Naive thymus-derived CD4-positive, alpha-beta T cell (primary cell): ENCODE measurements at regions of chr11 and their contacts with region 1.

Region 1: GRCh38 chr11:124673333-124674167 is at the starts of genes SIAE and SPA17:
- DNase-seq: peak; percentile 63 to 92 (median 87)
- ATAC-seq: peak; percentile 91
- H3K4me3 ChIP-seq: peak within 1 kb of the TSS; percentile 76
- H3K4me3 Mint-ChIP-seq: peak within 1 kb of the TSS in 9 of 10 donors; percentile 82 to 94 (median 91)
- H3K27ac ChIP-seq: peak within 1 kb of the TSS; percentile 91
- H3K27ac Mint-ChIP-seq: peak within 1 kb of the TSS in 7 of 9 donors; percentile 94 to 100 (median 98)
- H3K4me1 ChIP-seq: peaks cover 14 to 40% of the 10 kb centered on the region in 2 donors
- H3K4me1 Mint-ChIP-seq: peaks cover 22 to 39% (median 31%) of the 10 kb centered on the region in 7 donors
- H3K27me3 ChIP-seq: no peaks in the 10 kb centered on the region
- H3K27me3 Mint-ChIP-seq: peaks cover 0 to 4% (median 0%) of the 10 kb centered on the region in 5 donors
- total RNA-seq, gene SIAE: 6.2 to 11.3 (median 10.4) TPM
- total RNA-seq, gene SPA17: 1.00 to 1.1 (median 1.0) TPM

Region 2: DNA sequence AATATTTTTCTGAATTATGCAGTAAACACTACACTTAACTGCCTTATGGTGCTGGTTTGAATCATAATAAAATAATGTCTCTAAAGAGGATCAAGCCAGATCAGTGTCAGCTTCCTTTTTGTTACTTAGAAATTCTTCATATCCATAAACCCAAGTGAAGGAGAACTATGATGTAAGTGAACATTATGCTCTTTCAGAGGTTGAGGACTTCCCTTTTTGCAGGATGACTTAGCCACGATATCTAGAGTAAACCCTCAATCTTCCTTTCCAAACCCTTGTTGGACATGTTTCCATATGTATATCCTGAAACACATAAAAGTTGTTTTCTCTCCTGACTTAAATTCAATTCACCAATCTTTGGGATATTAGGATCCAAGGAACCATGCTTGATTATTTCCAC is 378.9 kb before region 1 on chr11:
- CTCF ChIA-PET with region 1: no interaction called
- POLR2A ChIA-PET with region 1: no interaction called
- intact Hi-C with region 1: no loop called
- DNase-seq: no peak
- ATAC-seq: no peak
- H3K4me3 ChIP-seq: no peak overlapping the region
- H3K4me3 Mint-ChIP-seq: no peak overlapping the region
- H3K27ac ChIP-seq: no peak overlapping the region
- H3K27ac Mint-ChIP-seq: no peak overlapping the region
- H3K4me1 ChIP-seq: no peaks in the 10 kb centered on the region
- H3K4me1 Mint-ChIP-seq: no peaks in the 10 kb centered on the region
- H3K27me3 ChIP-seq: no peaks in the 10 kb centered on the region
- H3K27me3 Mint-ChIP-seq: peaks cover 0 to 31% (median 6%) of the 10 kb centered on the region in 5 donors

Region 3: DNA sequence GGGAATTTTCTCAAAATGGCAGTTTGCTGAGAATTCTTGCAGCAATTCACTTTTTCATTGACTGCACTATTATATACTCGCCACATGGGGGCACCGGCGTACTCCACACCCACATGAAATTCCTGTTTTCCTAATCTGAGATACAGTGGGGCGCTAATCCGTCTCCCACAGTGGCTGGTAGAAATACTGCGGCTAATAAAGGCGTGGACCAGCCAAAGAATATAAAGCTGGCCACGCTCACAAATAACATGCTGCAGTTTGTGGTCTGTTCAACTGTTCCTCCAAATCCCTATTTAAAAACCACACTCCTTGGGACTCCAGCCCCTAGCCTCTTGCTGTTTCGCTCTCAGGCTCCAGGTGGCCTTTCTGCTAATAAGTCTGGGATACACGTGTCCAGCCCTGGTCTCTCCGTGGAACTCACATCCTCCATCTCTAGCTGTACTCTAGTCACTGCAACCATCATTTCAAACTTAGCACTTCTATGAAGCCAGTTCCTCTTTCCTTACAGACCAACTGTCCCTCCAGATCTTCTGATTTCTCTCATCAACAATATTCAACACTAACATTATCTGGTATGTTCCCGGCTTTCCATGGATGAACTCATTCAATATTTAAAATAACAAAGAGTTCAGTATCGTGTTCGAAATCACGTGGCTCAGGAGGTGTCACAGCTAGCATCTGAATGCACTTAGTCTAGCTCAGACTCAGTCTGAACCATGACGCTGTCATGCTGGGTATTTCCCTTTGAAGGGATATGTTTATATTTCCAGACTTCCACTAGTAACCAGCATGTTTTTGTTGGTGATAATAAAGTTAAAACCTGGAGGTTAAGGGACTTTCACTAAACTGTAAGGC is 28.9 kb before region 1 on chr11:
- CTCF ChIA-PET with region 1: interaction called, 5 read pairs
- POLR2A ChIA-PET with region 1: interaction called, 3 read pairs
- intact Hi-C with region 1: loop called in 1 of 2 experiments (anchors 1 kb)
- DNase-seq: peak in 7 of 9 donors; percentile 6 to 28 (median 21)
- ATAC-seq: peak; percentile 88
- H3K4me3 ChIP-seq: no peak overlapping the region
- H3K4me3 Mint-ChIP-seq: no peak overlapping the region
- H3K27ac ChIP-seq: no peak overlapping the region
- H3K27ac Mint-ChIP-seq: no peak overlapping the region
- H3K4me1 ChIP-seq: no peaks in the 10 kb centered on the region
- H3K4me1 Mint-ChIP-seq: peaks cover 3 to 11% (median 5%) of the 10 kb centered on the region in 7 donors
- H3K27me3 ChIP-seq: no peaks in the 10 kb centered on the region
- H3K27me3 Mint-ChIP-seq: no peaks in the 10 kb centered on the region

Region 4: DNA sequence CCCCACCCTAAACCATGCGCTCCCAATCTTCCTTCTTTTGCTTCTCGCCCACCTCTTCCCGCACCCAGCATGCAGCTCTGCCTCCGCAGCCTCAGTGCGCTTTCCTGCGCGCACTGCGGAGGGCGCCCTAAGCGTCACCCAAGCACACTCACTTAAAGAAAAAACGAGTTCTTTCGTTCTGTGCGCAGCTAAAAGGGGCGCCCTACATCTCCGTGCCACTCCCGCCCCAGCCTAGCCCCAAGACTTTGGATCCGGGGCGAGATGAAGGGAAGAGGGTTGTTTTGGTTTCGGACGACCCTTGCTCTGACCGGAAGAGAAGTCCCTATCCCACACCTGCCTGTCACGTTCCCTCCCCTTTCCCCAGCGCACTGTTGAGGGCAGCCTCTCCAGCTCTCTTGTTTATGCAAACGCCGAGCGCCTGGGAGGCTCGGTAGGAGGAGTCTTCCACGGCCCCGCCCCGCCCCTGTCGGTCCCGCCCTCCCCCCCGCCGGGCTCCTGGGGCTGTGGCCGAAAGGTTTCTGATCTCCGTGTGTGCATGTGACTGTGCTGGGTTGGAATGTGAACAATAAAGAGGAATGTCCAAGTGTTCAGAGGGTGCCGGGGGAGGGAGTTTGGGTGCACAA is 73.2 kb after region 1 on chr11:
- CTCF ChIA-PET with region 1: interaction called, 34 read pairs
- POLR2A ChIA-PET with region 1: interaction called, 112 read pairs
- intact Hi-C with region 1: loop called (anchors 1 kb)
- DNase-seq: peak; percentile 66 to 88 (median 85)
- ATAC-seq: peak; percentile 93
- H3K4me3 ChIP-seq: peak overlapping the region; percentile 99
- H3K4me3 Mint-ChIP-seq: peak overlapping the region; percentile 91 to 100 (median 98)
- H3K27ac ChIP-seq: peak overlapping the region; percentile 72
- H3K27ac Mint-ChIP-seq: peak overlapping the region; percentile 91 to 98 (median 96)
- H3K4me1 ChIP-seq: peaks cover 0 to 3% of the 10 kb centered on the region in 2 donors
- H3K4me1 Mint-ChIP-seq: peaks cover 4 to 37% (median 19%) of the 10 kb centered on the region in 7 donors
- H3K27me3 ChIP-seq: no peaks in the 10 kb centered on the region
- H3K27me3 Mint-ChIP-seq: peaks cover 0 to 22% (median 0%) of the 10 kb centered on the region in 5 donors

Region 5: GRCh38 chr11:124793466-124794278 is 120.1 kb after region 1 on chr11:
- CTCF ChIA-PET with region 1: interaction called, 51 read pairs
- POLR2A ChIA-PET with region 1: interaction called, 29 read pairs
- intact Hi-C with region 1: loop called (anchors 1 kb)
- DNase-seq: peak in 6 of 9 donors; percentile 5 to 50 (median 40)
- ATAC-seq: peak; percentile 84
- H3K4me3 ChIP-seq: no peak overlapping the region
- H3K4me3 Mint-ChIP-seq: no peak overlapping the region
- H3K27ac ChIP-seq: no peak overlapping the region
- H3K27ac Mint-ChIP-seq: peak overlapping the region in 1 of 9 donors; percentile 2
- H3K4me1 ChIP-seq: peaks cover 2 to 3% of the 10 kb centered on the region in 2 donors
- H3K4me1 Mint-ChIP-seq: peaks cover 17 to 45% (median 41%) of the 10 kb centered on the region in 7 donors
- H3K27me3 ChIP-seq: no peaks in the 10 kb centered on the region
- H3K27me3 Mint-ChIP-seq: no peaks in the 10 kb centered on the region

Region 6: DNA sequence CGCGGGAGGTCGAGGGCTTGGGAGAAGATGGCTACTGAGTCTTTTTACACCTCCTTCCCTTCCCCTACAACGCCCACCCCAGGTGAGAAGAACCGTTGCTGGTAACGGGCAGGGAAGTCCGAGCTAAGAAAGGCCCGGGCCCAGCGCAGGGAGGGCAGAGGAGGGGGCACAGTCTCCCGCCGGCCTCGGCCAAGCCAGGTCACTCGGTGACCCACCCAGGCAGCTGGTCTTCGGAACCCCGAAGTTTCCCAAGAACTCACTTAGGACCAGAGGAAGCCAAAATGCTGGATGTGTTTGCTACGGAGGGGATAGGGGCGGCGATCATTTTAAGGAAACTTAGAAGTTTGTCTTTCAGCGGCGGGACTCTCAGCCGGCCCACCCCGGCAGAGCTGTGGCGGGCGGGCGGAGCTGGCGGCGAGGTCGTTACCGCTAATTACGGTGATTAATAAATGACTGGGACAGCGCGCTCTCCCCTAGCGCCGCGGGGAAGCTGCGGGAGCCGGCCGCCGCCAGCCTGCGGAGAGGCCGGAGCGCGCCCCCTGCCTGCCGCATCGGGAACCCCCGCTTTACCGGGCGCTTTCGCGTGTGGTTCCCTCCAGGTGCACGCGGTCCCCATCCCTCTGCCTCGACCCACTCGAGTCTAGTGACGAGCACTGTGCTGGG is 192.5 kb after region 1 on chr11:
- CTCF ChIA-PET with region 1: interaction called, 3 read pairs
- POLR2A ChIA-PET with region 1: no interaction called
- intact Hi-C with region 1: loop called in 1 of 2 experiments (anchors 2 kb)
- DNase-seq: peak in 8 of 9 donors; percentile 27 to 61 (median 46)
- ATAC-seq: peak; percentile 72
- H3K4me3 ChIP-seq: no peak overlapping the region
- H3K4me3 Mint-ChIP-seq: peak overlapping the region in 7 of 10 donors; percentile 37 to 68 (median 51)
- H3K27ac ChIP-seq: no peak overlapping the region
- H3K27ac Mint-ChIP-seq: peak overlapping the region in 1 of 9 donors; percentile 54
- H3K4me1 ChIP-seq: peaks cover 5 to 29% of the 10 kb centered on the region in 2 donors
- H3K4me1 Mint-ChIP-seq: peaks cover 7 to 67% (median 43%) of the 10 kb centered on the region in 7 donors
- H3K27me3 ChIP-seq: peaks cover 20 to 70% of the 10 kb centered on the region in 2 donors
- H3K27me3 Mint-ChIP-seq: peaks cover 80 to 97% (median 91%) of the 10 kb centered on the region in 5 donors

Region 7: DNA sequence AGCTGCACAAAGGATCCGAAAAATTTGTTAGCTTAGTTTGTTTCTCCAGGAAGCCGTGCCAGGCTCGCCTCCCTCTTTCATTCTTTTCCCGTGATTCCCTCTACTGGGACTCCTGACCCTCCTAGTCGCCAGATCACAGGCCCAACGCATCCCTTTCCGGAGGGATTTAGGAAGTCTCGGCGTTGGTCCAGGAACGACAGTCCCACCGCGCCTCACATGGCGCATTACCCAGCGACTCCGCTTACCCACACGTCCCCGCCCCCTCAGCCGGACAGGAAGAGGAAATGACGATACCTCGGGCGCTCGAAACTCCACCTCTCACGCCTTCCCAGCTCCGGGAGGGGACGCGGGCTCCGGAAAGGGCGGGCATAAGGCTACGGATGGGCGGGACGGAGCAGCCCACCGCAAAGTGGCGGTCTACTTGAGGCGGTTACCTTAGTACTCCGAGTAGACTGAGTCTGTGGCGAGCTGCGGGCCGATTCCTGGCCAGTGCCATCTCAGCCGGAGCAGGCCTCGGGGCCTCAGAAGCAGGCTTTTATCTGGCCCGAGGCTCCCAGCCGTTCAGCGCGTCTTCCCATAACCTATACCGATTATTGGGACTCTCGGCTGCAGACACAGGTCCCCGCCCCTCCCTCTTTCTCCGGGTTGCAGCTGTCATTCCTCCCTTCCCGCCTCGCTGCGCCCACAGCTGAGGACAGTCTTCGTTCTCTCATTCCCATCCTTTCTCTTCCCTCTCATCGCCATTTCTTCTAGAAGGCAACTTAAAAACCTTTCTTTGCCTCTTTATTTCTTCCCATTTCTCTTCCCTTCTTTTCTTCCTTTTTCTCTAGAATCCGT is 280.4 kb after region 1 on chr11 and contains the start of gene CCDC15:
- CTCF ChIA-PET with region 1: interaction called, 3 read pairs
- POLR2A ChIA-PET with region 1: interaction called, 6 read pairs
- intact Hi-C with region 1: loop called (anchors 2 kb)
- DNase-seq: peak; percentile 78 to 94 (median 92)
- ATAC-seq: peak; percentile 99
- H3K4me3 ChIP-seq: peak within 1 kb of the TSS; percentile 72
- H3K4me3 Mint-ChIP-seq: no peak within 1 kb of the TSS
- H3K27ac ChIP-seq: peak within 1 kb of the TSS; percentile 85
- H3K27ac Mint-ChIP-seq: no peak within 1 kb of the TSS
- H3K4me1 ChIP-seq: peaks cover 27 to 42% of the 10 kb centered on the region in 2 donors
- H3K4me1 Mint-ChIP-seq: peaks cover 0 to 7% (median 0%) of the 10 kb centered on the region in 7 donors
- H3K27me3 ChIP-seq: no peaks in the 10 kb centered on the region
- H3K27me3 Mint-ChIP-seq: no peaks in the 10 kb centered on the region
- total RNA-seq, gene CCDC15: 1.6 to 4.7 (median 2.7) TPM

Region 8: DNA sequence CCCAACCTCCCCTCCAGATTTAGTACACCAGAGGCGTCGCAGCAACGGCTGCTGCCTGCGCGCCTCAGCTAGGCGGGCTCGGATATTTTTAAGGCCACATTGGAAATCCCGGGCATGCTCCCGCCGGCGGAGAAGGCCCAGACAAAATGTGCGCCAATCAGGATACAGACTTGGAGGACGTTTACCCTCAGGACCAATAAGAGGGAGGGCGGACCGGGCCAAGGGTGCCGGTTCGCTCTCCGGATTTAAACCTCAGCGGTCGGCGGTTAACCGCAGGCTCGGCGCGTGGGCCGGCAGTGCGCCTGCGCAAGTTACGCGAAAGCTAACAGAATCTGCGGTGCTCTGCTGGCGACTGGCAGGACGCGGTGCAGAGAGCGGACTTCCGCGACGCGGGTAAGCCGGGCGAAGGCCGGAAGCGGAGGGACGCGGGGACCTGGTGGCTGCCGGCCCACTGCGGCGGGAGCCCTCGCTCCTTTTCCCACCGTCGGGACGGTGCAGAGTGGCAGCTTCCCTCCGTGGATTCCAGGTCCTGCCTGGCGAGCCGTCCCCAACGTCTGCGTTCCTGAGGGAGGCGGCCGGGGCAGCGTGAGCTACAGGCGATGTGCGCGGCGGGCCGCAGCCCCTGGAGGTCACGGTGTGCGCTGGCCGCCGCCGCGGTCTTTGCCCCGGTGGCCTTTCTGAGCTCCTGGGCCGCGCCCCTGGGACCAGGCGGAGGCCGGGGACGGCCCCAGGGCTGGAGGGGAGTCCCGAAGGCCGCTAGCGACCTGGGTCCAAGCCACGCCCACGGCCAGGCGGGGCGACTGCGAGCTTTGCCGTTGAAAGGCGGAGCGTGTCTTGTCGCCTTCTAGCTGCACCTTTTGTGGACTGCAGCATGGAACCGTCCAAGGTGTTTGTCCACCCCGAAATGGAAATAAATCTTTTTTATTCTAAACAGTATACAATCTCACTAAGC is 1214.1 kb after region 1 on chr11 and contains the start of gene HYLS1:
- CTCF ChIA-PET with region 1: no interaction called
- POLR2A ChIA-PET with region 1: no interaction called
- intact Hi-C with region 1: loop called (anchors 5 kb)
- DNase-seq: peak; percentile 90 to 100 (median 94)
- ATAC-seq: peak; percentile 95
- H3K4me3 ChIP-seq: peak within 1 kb of the TSS; percentile 86
- H3K4me3 Mint-ChIP-seq: peak within 1 kb of the TSS; percentile 87 to 98 (median 96)
- H3K27ac ChIP-seq: peak within 1 kb of the TSS; percentile 71
- H3K27ac Mint-ChIP-seq: peak within 1 kb of the TSS; percentile 88 to 99 (median 97)
- H3K4me1 ChIP-seq: peaks cover 6% of the 10 kb centered on the region in 2 donors
- H3K4me1 Mint-ChIP-seq: peaks cover 20 to 57% (median 39%) of the 10 kb centered on the region in 7 donors
- H3K27me3 ChIP-seq: no peaks in the 10 kb centered on the region
- H3K27me3 Mint-ChIP-seq: peaks cover 0 to 4% (median 0%) of the 10 kb centered on the region in 5 donors
- total RNA-seq, gene HYLS1: 2.7 to 13.1 (median 8.0) TPM